Left lung (tissue), 14 donors: ENCODE measurements at regions of chr7 and their contacts with region 1.

Region 1: DNA sequence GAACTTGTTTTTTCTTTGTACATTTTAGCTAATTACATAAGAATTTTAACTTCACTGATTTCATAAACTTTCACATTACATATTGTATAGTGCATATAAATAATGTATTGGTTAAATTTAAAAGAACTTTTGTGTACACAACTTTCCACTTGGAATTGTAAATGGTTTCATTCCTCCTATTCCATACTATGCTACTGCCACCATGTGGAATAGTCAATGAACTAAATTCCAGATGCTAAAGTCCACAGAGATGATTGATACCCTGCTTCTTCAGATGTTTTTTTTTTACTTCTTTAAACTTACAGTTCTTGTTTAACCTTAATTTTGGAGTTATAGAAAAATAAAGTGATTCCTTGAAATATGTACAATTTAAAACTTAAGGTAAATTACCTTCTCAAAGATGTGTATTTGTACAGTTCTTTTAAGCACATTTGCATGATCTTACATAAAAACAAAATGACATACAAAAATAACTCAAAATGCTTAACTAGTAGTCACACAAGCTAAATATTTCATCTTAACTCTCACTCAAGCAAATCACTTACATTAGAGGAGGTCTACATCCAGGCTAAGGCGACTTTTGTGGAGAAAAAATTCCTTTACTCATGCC is 247.6 kb upstream of the HGF start:
- DNase-seq: peak in 1 of 4 donors; percentile 49
- ATAC-seq: peak; percentile 43
- H3K4me3 ChIP-seq: no peak overlapping the region
- H3K27ac ChIP-seq: no peak overlapping the region
- H3K4me1 ChIP-seq: no peaks in the 10 kb centered on the region
- H3K27me3 ChIP-seq: no peaks in the 10 kb centered on the region
- CTCF ChIP-seq: peak; percentile 14 to 44

Region 2: GRCh38 chr7:81499262-81500116 is 518.0 kb before region 1 on chr7:
- intact Hi-C with region 1: loop called in 1 of 2 experiments (anchors 5 kb)
- DNase-seq: peak in 2 of 4 donors; percentile 69 to 83
- ATAC-seq: peak; percentile 91
- H3K4me3 ChIP-seq: no peak overlapping the region
- H3K27ac ChIP-seq: peak overlapping the region in 1 of 2 donors; percentile 10
- H3K4me1 ChIP-seq: no peaks in the 10 kb centered on the region
- H3K27me3 ChIP-seq: no peaks in the 10 kb centered on the region
- CTCF ChIP-seq: peak in 1 of 2 donors; percentile 45

Region 3: GRCh38 chr7:82562716-82563404 is 545.4 kb after region 1 on chr7:
- intact Hi-C with region 1: no loop called
- DNase-seq: no peak
- ATAC-seq: no peak
- H3K4me3 ChIP-seq: no peak overlapping the region
- H3K27ac ChIP-seq: no peak overlapping the region
- H3K4me1 ChIP-seq: no peaks in the 10 kb centered on the region
- H3K27me3 ChIP-seq: no peaks in the 10 kb centered on the region
- CTCF ChIP-seq: no peak